ENCODE measurements at regions of chr9 and their contacts with region 1.

Region 1: GRCh38 chr9:33306037-33306436 is 15.7 kb downstream of the NFX1 start:
- DNase-seq: peak; percentile 81
- H3K4me3 Mint-ChIP-seq: no peak overlapping the region
- H3K27ac Mint-ChIP-seq: no peak overlapping the region
- H3K4me1 Mint-ChIP-seq: peaks cover 15% of the 10 kb centered on the region
- H3K27me3 Mint-ChIP-seq: no peaks in the 10 kb centered on the region

Region 2: GRCh38 chr9:33239921-33240320 is 66.1 kb before region 1 on chr9 and contains the start of gene SPINK4:
- intact Hi-C with region 1: no loop called
- DNase-seq: no peak
- H3K4me3 Mint-ChIP-seq: no peak within 1 kb of the TSS
- H3K27ac Mint-ChIP-seq: no peak within 1 kb of the TSS
- H3K4me1 Mint-ChIP-seq: peaks cover 9% of the 10 kb centered on the region
- H3K27me3 Mint-ChIP-seq: peaks cover 3% of the 10 kb centered on the region
- total RNA-seq, gene SPINK4: not detected in 2 replicates

Region 3: DNA sequence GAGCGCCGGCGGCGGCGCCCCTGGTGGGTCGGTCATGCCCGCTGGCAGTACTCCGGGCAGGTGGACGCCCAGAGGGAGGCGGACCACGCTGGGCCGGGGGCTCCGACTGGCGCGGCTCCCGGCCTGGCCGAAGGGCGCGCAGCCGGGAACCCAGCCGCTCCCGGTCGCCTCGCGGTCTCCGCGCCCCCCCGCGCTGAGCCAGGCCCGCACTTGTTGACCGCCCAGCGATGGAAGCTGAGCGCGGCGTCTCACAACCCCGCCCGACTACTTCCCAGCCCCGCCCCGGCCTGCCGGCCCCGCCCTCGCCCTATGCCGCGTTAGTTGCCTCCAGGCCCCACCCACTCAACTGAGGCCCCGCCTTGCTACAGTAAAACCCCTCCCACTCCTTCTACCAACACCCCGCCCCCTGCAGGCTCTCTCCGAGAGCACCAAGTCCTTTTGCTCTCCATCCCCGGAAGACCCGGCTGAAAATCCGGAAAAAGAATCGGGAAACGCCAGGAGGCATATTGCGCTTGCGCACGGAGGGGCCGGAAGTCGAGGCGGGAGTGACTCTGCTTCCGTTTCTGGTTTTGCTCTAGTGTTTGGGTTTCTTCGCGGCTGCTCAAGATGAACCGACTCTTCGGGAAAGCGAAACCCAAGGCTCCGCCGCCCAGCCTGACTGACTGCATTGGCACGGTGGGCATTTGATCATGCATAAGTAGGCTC is 41.4 kb before region 1 on chr9 and contains the starts of genes BAG1 and CHMP5:
- intact Hi-C with region 1: loop called (anchors 1 kb)
- DNase-seq: peak; percentile 100
- H3K4me3 Mint-ChIP-seq: peak within 1 kb of the TSS; percentile 97
- H3K27ac Mint-ChIP-seq: peak within 1 kb of the TSS; percentile 99
- H3K4me1 Mint-ChIP-seq: peaks cover 52% of the 10 kb centered on the region
- H3K27me3 Mint-ChIP-seq: no peaks in the 10 kb centered on the region
- total RNA-seq, gene BAG1: 72.4 and 73.6 TPM in 2 replicates
- total RNA-seq, gene CHMP5: 73.9 and 77.7 TPM in 2 replicates

Region 4: GRCh38 chr9:33295571-33295970 is 10.5 kb before region 1 on chr9:
- intact Hi-C with region 1: loop called (anchors 1 kb)
- DNase-seq: no peak
- H3K4me3 Mint-ChIP-seq: peak overlapping the region; percentile 60
- H3K27ac Mint-ChIP-seq: peak overlapping the region; percentile 55
- H3K4me1 Mint-ChIP-seq: peaks cover 70% of the 10 kb centered on the region
- H3K27me3 Mint-ChIP-seq: no peaks in the 10 kb centered on the region

Region 5: GRCh38 chr9:33320568-33321261 is 14.7 kb after region 1 on chr9:
- intact Hi-C with region 1: loop called (anchors 1 kb)
- DNase-seq: no peak
- H3K4me3 Mint-ChIP-seq: no peak overlapping the region
- H3K27ac Mint-ChIP-seq: peak overlapping the region; percentile 76
- H3K4me1 Mint-ChIP-seq: peaks cover 12% of the 10 kb centered on the region
- H3K27me3 Mint-ChIP-seq: no peaks in the 10 kb centered on the region

Measured in activated CD4-positive, alpha-beta T cell treated with anti-CD3 and anti-CD28 coated beads, Interleukin-2, amount 10 ng/mL, durations not matched to agents 24 days and 14 days (primary cell).